ENCODE measurements at regions of chr9 and their contacts with region 1.

Region 1: DNA sequence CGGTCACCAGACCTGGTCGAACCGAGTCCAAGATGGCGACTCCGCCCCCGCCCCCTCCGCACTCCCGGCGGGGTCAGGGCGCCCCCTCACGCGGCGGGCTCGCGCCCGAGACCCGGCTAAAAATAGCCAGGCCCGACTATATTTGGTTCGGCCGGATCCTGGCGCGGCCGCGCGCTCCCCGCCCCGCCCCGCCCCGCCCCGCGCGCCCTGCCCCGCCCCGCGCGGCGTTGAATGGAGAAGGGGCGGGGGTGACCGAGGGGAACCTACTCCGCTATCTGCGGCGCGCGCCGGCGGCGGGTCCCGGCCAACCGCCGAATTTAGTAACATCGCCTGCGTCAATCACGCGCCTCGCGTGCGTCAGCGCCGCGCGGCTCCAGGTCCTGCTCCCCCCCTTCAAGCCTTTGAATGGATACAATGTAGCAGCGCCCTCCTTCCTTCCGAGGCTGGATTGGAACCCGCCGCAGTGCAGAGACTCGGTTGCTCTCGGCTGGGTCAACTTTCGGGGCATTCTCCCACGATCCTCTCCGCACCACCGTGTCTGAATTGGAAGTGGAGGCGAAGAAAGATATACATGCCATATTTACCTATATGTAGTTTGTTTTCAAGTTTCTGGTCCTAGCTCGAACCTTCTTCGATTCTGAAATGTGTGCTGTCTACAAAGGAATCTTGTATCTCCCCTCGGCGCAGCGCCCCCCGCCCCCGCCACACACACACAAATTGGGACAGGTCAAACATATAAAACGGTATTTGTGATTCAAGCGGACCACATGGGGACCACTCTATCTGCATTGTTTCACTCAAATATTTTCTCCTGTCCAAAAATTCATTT is 1.6 kb upstream of the NR4A3 start:
- DNase-seq: peak; percentile 97
- H3K4me3 ChIP-seq: peak overlapping the region; percentile 85
- H3K27ac ChIP-seq: peak overlapping the region; percentile 98
- H3K4me1 ChIP-seq: peaks cover 25% of the 10 kb centered on the region
- H3K27me3 ChIP-seq: no peaks in the 10 kb centered on the region
- CTCF ChIP-seq: peak; percentile 33; the same call in 1 of the 2 replicates

Region 2: DNA sequence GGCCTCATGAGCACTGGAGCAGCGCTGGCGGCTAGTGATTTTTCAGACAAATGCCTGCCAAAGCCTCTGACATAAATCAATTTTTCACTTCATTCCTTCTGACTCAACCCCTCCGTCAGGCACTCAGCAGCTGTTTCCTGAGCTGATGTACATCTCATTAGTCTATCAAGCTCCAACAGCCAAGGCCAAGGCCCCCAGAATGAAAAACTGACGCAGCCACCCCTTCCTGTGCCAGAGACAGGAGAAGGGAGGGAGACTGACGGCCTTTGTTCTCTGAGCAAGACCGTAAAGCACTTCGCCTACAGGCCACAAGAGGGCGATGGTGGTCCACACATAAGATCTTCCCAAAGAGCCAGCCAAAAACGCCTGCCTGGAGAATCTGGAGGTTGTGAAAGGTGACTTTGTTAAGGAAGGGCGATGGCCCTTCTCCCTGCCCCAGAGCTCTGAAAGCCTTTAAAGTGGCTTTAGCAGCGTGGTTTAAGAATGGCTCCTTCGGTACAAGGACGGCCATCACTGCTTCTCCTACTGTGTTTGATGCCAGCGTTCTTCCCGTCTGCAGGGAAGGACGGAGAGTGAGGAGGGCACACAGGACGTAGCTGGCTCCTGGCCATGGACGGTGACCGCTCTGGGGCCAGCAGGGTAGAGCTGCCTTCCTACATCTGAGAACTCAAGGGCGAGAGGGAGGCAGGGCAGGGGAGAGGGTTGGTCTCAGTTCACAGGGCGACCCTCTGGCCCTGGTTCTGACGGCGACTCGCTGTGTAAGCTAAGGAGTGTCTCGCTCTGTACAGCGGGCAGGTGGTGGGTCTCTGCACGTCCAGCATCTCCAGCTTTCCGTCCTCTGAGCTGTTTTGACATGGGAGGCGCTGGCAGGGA is 635.4 kb before region 1 on chr9:
- CTCF ChIA-PET with region 1: no interaction called
- POLR2A ChIA-PET with region 1: no interaction called
- intact Hi-C with region 1: loop called (anchors 10 kb)
- DNase-seq: peak; percentile 95
- H3K4me3 ChIP-seq: no peak overlapping the region
- H3K27ac ChIP-seq: no peak overlapping the region
- H3K4me1 ChIP-seq: peaks cover 15% of the 10 kb centered on the region
- H3K27me3 ChIP-seq: no peaks in the 10 kb centered on the region
- CTCF ChIP-seq: peak; percentile 94

Region 3: DNA sequence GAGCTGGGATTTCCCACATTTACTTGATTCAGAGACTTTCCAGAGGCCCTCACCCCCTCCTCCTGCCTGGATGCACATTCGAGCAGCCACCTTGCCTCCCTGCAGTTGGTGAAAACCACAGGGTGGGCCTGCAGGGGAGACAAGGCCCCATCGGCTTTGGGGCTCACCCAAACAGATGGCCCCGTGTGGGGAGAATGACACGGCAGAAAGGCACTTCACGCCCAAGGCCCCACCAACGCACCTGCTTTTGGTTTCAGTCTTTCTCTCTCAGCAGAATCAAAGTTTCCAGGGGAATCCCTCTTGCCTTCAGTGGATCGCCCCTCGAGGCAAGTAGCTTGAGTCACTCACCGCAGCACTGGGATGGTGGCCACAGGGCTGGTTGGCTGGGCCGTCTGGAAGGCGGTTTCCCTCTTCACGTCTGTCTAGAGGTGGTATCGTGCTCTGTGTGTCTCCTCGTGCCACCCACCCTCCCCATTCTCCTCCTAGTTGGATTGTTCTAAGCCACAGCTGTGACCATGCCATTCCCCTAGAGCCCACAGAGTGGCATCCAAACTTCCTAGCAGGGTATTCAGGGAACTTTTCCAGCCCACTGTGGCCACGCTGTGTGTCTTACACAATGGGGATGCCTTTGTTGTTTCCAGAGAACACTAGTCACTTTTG is 566.2 kb before region 1 on chr9:
- CTCF ChIA-PET with region 1: no interaction called
- POLR2A ChIA-PET with region 1: no interaction called
- intact Hi-C with region 1: no loop called
- DNase-seq: no peak
- H3K4me3 ChIP-seq: no peak overlapping the region
- H3K27ac ChIP-seq: no peak overlapping the region
- H3K4me1 ChIP-seq: no peaks in the 10 kb centered on the region
- H3K27me3 ChIP-seq: no peaks in the 10 kb centered on the region
- CTCF ChIP-seq: no peak

Region 4: GRCh38 chr9:99266255-99267023 is 553.6 kb before region 1 on chr9:
- CTCF ChIA-PET with region 1: no interaction called
- POLR2A ChIA-PET with region 1: no interaction called
- intact Hi-C with region 1: loop called (anchors 5 kb)
- DNase-seq: peak; percentile 85
- H3K4me3 ChIP-seq: no peak overlapping the region
- H3K27ac ChIP-seq: no peak overlapping the region
- H3K4me1 ChIP-seq: peaks cover 14% of the 10 kb centered on the region
- H3K27me3 ChIP-seq: no peaks in the 10 kb centered on the region
- CTCF ChIP-seq: peak; percentile 94

Region 5: GRCh38 chr9:99906403-99907207 is 86.5 kb after region 1 on chr9 and contains the start of gene STX17:
- CTCF ChIA-PET with region 1: no interaction called
- POLR2A ChIA-PET with region 1: no interaction called
- intact Hi-C with region 1: loop called (anchors 5 kb)
- DNase-seq: peak; percentile 84
- H3K4me3 ChIP-seq: peak within 1 kb of the TSS; percentile 81
- H3K27ac ChIP-seq: peak within 1 kb of the TSS; percentile 94
- H3K4me1 ChIP-seq: peaks cover 7% of the 10 kb centered on the region
- H3K27me3 ChIP-seq: no peaks in the 10 kb centered on the region
- CTCF ChIP-seq: no peak
- total RNA-seq, gene STX17: 20.9 and 26.0 TPM in 2 replicates

Region 6: DNA sequence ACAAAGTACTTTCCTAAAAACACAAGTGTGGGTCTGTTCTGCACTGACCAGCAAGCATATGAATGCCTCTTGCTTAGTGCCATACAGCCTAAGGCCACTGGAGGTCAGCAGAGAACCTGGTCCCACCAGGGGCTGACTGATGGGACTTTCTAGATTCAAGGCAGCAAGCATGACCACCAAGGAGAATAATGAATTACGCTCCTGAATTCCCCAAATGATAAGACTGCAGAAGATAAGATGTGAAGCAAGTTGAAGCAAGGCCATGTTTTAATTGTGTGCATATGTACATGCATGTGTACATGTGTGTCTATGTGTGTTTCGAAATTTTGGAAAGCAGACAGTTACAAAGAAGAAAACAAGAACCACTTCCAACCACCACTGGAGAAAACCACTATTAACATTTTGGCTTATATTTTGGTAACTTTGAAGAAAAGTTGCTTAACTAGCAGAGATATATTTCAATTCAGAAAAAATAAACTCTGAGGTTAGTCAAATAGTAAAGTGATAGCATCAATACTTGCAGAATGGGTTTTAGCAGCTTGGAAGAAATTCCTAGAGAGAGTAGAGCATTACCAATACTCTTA is 208.2 kb after region 1 on chr9:
- CTCF ChIA-PET with region 1: no interaction called
- POLR2A ChIA-PET with region 1: no interaction called
- intact Hi-C with region 1: loop called (anchors 5 kb)
- DNase-seq: peak; percentile 81
- H3K4me3 ChIP-seq: no peak overlapping the region
- H3K27ac ChIP-seq: no peak overlapping the region
- H3K4me1 ChIP-seq: peaks cover 20% of the 10 kb centered on the region
- H3K27me3 ChIP-seq: no peaks in the 10 kb centered on the region
- CTCF ChIP-seq: peak; percentile 94

Region 7: DNA sequence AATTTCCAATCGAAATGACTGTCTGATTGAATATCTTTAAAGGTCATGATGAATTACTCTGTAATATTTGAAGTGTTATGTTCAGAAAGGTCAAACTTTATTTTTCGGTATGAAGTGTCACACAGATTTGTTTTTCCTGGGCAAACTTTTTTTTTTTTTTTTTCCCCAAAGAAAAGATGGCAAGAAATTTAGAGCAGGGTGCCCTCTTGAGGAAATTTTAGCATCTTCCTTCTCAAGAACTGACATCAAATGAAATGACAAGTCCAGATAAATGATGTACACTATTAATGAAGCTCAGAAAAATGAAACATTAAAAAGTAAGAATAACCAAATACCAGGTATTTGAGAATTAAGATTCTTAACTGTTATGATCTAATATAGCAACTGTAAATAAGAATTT is 402.6 kb after region 1 on chr9:
- CTCF ChIA-PET with region 1: interaction called, 8 read pairs
- POLR2A ChIA-PET with region 1: no interaction called
- intact Hi-C with region 1: loop called (anchors 2 kb)
- DNase-seq: peak; percentile 69
- H3K4me3 ChIP-seq: no peak overlapping the region
- H3K27ac ChIP-seq: no peak overlapping the region
- H3K4me1 ChIP-seq: no peaks in the 10 kb centered on the region
- H3K27me3 ChIP-seq: no peaks in the 10 kb centered on the region
- CTCF ChIP-seq: peak; percentile 68

Region 8: DNA sequence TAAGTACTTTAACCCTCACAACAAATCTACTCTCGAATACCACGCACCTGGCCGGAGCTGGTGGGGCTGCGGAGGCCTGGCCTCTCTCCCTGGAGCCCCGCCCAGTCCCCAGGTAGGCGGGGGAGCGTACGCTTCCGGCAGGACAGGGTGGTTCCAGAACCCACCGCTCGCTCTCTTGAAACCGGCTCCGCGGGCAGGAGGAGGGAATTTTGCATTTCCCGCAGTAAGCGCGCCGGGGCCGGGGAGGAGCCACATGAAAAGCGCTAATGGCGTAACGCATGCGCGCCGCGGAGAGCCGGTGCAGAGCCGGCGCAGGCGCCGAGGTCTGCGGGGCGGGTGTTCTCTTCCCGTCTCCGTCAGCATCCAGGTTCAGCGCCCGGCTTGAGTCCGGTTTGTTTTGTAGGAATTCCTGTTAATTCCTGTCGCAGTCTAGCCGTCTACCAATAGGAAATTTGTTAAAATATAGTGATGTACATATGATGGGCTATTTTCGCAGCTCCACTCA is 778.6 kb after region 1 on chr9:
- CTCF ChIA-PET with region 1: no interaction called
- POLR2A ChIA-PET with region 1: no interaction called
- intact Hi-C with region 1: loop called (anchors 5 kb)
- DNase-seq: peak; percentile 87
- H3K4me3 ChIP-seq: peak overlapping the region; percentile 42
- H3K27ac ChIP-seq: no peak overlapping the region
- H3K4me1 ChIP-seq: peaks cover 3% of the 10 kb centered on the region
- H3K27me3 ChIP-seq: no peaks in the 10 kb centered on the region
- CTCF ChIP-seq: no peak

Measured in A673 (cell line).